ENCODE measurements at regions of chr1 and their contacts with region 1.

Region 1: DNA sequence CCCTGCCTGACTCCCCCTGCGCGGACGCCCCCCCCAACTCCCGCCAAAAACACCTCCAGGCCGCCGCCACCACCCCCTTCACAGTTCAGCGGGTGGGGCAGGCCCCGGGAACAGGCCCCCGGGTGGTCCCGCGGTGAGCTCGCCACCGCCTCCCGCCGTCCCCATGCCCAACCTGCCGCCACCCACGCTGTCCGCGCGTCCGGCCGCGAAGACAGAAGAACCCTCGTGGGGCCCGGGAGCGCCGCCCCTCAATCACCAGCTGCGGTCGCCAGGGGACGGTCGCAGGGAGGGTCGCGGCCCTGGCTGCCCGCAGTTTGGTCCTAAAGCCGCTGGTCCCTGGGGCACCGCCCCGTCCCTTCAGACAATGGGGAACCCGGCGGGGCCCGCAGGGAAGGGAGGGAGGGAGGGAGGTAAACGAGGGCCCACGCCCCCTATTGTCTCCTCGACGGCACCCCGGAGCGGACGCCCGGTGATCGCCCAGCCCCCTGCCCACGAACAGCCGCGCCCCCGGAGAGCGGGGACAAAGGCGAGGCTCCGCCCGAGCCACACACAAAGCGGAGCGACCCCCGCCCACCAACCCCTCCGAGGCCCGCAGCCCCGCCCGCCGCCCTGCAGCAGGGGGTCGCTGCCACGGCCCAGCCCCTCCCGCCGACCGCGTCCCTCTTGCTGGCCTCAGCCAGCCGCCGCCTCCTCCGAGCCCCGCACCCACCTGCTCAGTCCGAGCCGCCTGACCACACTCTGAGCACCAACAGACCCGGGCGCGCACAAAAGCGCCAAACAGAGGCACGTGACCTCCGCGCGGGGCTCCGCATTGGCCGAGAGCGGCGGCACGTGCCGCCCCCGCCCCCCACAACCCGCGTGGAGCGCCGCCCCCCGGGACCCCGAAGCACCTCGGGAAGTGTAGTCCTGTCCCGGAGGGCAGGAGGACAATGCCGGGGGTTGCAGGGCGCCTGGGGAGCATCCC is at the start of gene STMN1:
- DNase-seq: peak; percentile 81 to 94 (median 88)
- ATAC-seq: peak; percentile 75
- H3K4me3 ChIP-seq: peak within 1 kb of the TSS; percentile 72
- H3K4me3 Mint-ChIP-seq: peak within 1 kb of the TSS; percentile 98
- H3K27ac ChIP-seq: peak within 1 kb of the TSS; percentile 64 to 65
- H3K27ac Mint-ChIP-seq: peak within 1 kb of the TSS; percentile 97
- H3K4me1 ChIP-seq: peaks cover 22% of the 10 kb centered on the region
- H3K4me1 Mint-ChIP-seq: peaks cover 23% of the 10 kb centered on the region
- H3K27me3 ChIP-seq: no peaks in the 10 kb centered on the region
- H3K27me3 Mint-ChIP-seq: no peaks in the 10 kb centered on the region
- CTCF ChIP-seq: no peak
- total RNA-seq, gene STMN1: 25.2 to 25.6 TPM

Region 2: GRCh38 chr1:25858906-25859789 is 46.8 kb before region 1 on chr1 and contains the start of gene AUNIP:
- CTCF ChIA-PET with region 1: no interaction called
- POLR2A ChIA-PET with region 1: no interaction called
- intact Hi-C with region 1: loop called in 1 of 2 experiments (anchors 2 kb)
- DNase-seq: peak; percentile 78 to 97 (median 87)
- ATAC-seq: peak; percentile 99
- H3K4me3 ChIP-seq: peak within 1 kb of the TSS; percentile 72
- H3K4me3 Mint-ChIP-seq: peak within 1 kb of the TSS; percentile 86
- H3K27ac ChIP-seq: peak within 1 kb of the TSS; percentile 31 to 58
- H3K27ac Mint-ChIP-seq: peak within 1 kb of the TSS; percentile 87
- H3K4me1 ChIP-seq: peaks cover 22% of the 10 kb centered on the region
- H3K4me1 Mint-ChIP-seq: peaks cover 20% of the 10 kb centered on the region
- H3K27me3 ChIP-seq: no peaks in the 10 kb centered on the region
- H3K27me3 Mint-ChIP-seq: no peaks in the 10 kb centered on the region
- CTCF ChIP-seq: no peak
- total RNA-seq, gene AUNIP: not detected

Region 3: GRCh38 chr1:25895365-25895993 is 10.5 kb before region 1 on chr1:
- CTCF ChIA-PET with region 1: interaction called, 36 read pairs
- POLR2A ChIA-PET with region 1: interaction called, 38 read pairs
- intact Hi-C with region 1: loop called (anchors 1 kb)
- DNase-seq: peak; percentile 86 to 96 (median 88)
- ATAC-seq: peak; percentile 100
- H3K4me3 ChIP-seq: no peak overlapping the region
- H3K4me3 Mint-ChIP-seq: no peak overlapping the region
- H3K27ac ChIP-seq: no peak overlapping the region
- H3K27ac Mint-ChIP-seq: peak overlapping the region; percentile 24
- H3K4me1 ChIP-seq: peaks cover 10% of the 10 kb centered on the region
- H3K4me1 Mint-ChIP-seq: peaks cover 9% of the 10 kb centered on the region
- H3K27me3 ChIP-seq: no peaks in the 10 kb centered on the region
- H3K27me3 Mint-ChIP-seq: no peaks in the 10 kb centered on the region
- CTCF ChIP-seq: peak; percentile 98

Region 4: DNA sequence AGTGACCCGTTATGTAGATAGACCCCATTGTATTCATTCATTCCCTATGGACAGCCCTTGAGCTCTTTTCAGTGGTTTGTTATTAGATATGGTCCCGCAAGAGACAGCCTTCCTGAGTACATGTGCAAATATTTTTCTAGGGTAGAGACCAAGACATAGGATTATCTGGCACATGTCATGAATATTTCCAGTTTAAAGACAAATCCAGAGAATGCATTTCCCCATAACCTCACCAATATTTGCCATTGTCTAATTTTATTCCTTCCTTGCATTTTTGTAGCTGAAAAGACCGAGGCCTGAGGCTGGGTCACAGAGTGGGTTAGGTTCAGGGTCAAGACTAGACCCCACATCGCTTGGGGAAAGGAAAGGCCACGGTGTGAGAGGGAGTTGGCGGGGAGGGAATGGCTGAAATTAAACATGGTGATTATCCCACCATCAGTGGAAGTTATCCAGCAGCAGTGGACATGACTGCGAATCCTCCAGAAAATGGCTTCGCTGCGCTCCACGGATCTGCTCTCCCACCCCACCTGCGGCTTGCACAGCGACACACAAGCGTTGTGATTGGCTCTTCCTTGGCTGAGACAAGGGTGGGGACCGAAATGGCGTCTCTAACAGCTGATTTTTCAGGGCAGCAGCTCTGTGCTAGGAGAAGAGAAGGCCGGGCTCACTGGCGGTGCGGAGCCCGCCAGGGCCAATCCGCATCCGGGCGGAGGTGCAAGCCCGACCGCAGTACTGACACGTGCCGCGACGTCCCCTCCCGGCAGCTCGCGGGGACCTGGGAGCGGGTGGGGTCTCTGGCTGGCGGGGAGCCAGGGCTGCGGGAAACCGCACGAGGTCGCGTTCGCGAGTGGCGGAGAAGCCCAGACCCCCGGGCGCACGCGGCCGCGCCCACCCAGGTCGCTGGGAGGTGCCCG is 16.4 kb after region 1 on chr1:
- CTCF ChIA-PET with region 1: interaction called, 3 read pairs
- POLR2A ChIA-PET with region 1: interaction called, 25 read pairs
- intact Hi-C with region 1: loop called in 1 of 2 experiments (anchors 2 kb)
- DNase-seq: peak in 13 of 14 experiments; percentile 13 to 76 (median 37)
- ATAC-seq: peak; percentile 77
- H3K4me3 ChIP-seq: peak overlapping the region; percentile 67
- H3K4me3 Mint-ChIP-seq: peak overlapping the region; percentile 88
- H3K27ac ChIP-seq: no peak overlapping the region
- H3K27ac Mint-ChIP-seq: peak overlapping the region; percentile 84
- H3K4me1 ChIP-seq: peaks cover 32% of the 10 kb centered on the region
- H3K4me1 Mint-ChIP-seq: peaks cover 41% of the 10 kb centered on the region
- H3K27me3 ChIP-seq: no peaks in the 10 kb centered on the region
- H3K27me3 Mint-ChIP-seq: no peaks in the 10 kb centered on the region
- CTCF ChIP-seq: no peak

Region 5: GRCh38 chr1:25971066-25971810 is 65.3 kb after region 1 on chr1:
- CTCF ChIA-PET with region 1: no interaction called
- POLR2A ChIA-PET with region 1: interaction called, 16 read pairs
- intact Hi-C with region 1: no loop called
- DNase-seq: peak in 7 of 14 experiments; percentile 8 to 64 (median 51)
- ATAC-seq: peak; percentile 84
- H3K4me3 ChIP-seq: no peak overlapping the region
- H3K4me3 Mint-ChIP-seq: peak overlapping the region; percentile 28
- H3K27ac ChIP-seq: peak overlapping the region; percentile 5 to 23
- H3K27ac Mint-ChIP-seq: peak overlapping the region; percentile 79
- H3K4me1 ChIP-seq: peaks cover 22% of the 10 kb centered on the region
- H3K4me1 Mint-ChIP-seq: peaks cover 63% of the 10 kb centered on the region
- H3K27me3 ChIP-seq: no peaks in the 10 kb centered on the region
- H3K27me3 Mint-ChIP-seq: no peaks in the 10 kb centered on the region
- CTCF ChIP-seq: no peak

Region 6: GRCh38 chr1:26111530-26112406 is 205.8 kb after region 1 on chr1 and contains the start of gene PDIK1L:
- CTCF ChIA-PET with region 1: no interaction called
- POLR2A ChIA-PET with region 1: no interaction called
- intact Hi-C with region 1: loop called in 1 of 2 experiments (anchors 5 kb)
- DNase-seq: peak; percentile 91 to 99 (median 95)
- ATAC-seq: peak; percentile 86
- H3K4me3 ChIP-seq: peak within 1 kb of the TSS; percentile 99
- H3K4me3 Mint-ChIP-seq: peak within 1 kb of the TSS; percentile 96
- H3K27ac ChIP-seq: peak within 1 kb of the TSS; percentile 34 to 73
- H3K27ac Mint-ChIP-seq: peak within 1 kb of the TSS; percentile 92
- H3K4me1 ChIP-seq: peaks cover 24% of the 10 kb centered on the region
- H3K4me1 Mint-ChIP-seq: peaks cover 38% of the 10 kb centered on the region
- H3K27me3 ChIP-seq: no peaks in the 10 kb centered on the region
- H3K27me3 Mint-ChIP-seq: no peaks in the 10 kb centered on the region
- CTCF ChIP-seq: no peak
- total RNA-seq, gene PDIK1L: 9.5 to 9.9 TPM

Measured in CD4-positive, alpha-beta T cell (primary cell).